HepG2 (cell line): ENCODE measurements at regions of chr2 and their contacts with region 1.

Region 1: GRCh38 chr2:72745679-72746368 is 80.0 kb downstream of the EXOC6B start:
- DNase-seq: peak; percentile 81
- ATAC-seq: peak; percentile 62; the same call in 2 of the 3 replicates
- H3K4me3 ChIP-seq: no peak overlapping the region
- H3K27ac ChIP-seq: no peak overlapping the region
- H3K4me1 ChIP-seq: peaks cover 21% of the 10 kb centered on the region
- H3K27me3 ChIP-seq: no peaks in the 10 kb centered on the region
- CTCF ChIP-seq: peak; percentile 85
- EP300 ChIP-seq: no peak
- POLR2A ChIP-seq: no peak
- RAD21 ChIP-seq: peak; percentile 87

Region 2: GRCh38 chr2:71923887-71924533 is 821.8 kb before region 1 on chr2:
- CTCF ChIA-PET with region 1: interaction called, 6 read pairs
- POLR2A ChIA-PET with region 1: no interaction called
- in situ Hi-C with region 1: loop called (anchors 5 kb)
- intact Hi-C with region 1: loop called (anchors 1 kb)
- DNase-seq: peak; percentile 76
- ATAC-seq: peak; percentile 89
- H3K4me3 ChIP-seq: no peak overlapping the region
- H3K27ac ChIP-seq: no peak overlapping the region
- H3K4me1 ChIP-seq: no peaks in the 10 kb centered on the region
- H3K27me3 ChIP-seq: peaks cover 5 to 45% of the 10 kb centered on the region in 2 experiments; a peak in 4 of 5 replicates
- CTCF ChIP-seq: peak; percentile 93
- EP300 ChIP-seq: no peak
- POLR2A ChIP-seq: no peak
- RAD21 ChIP-seq: peak; percentile 78; the same call in 1 of the 2 replicates

Region 3: GRCh38 chr2:71934595-71935261 is 811.1 kb before region 1 on chr2:
- CTCF ChIA-PET with region 1: no interaction called
- POLR2A ChIA-PET with region 1: no interaction called
- in situ Hi-C with region 1: loop called (anchors 5 kb)
- intact Hi-C with region 1: loop called (anchors 5 kb)
- DNase-seq: no peak
- ATAC-seq: no peak; the same call in 2 of the 3 replicates
- H3K4me3 ChIP-seq: no peak overlapping the region
- H3K27ac ChIP-seq: no peak overlapping the region
- H3K4me1 ChIP-seq: no peaks in the 10 kb centered on the region
- H3K27me3 ChIP-seq: peaks cover 7 to 63% of the 10 kb centered on the region in 2 experiments; a peak in 3 of 5 replicates
- CTCF ChIP-seq: no peak
- EP300 ChIP-seq: no peak
- POLR2A ChIP-seq: no peak
- RAD21 ChIP-seq: no peak

Region 4: DNA sequence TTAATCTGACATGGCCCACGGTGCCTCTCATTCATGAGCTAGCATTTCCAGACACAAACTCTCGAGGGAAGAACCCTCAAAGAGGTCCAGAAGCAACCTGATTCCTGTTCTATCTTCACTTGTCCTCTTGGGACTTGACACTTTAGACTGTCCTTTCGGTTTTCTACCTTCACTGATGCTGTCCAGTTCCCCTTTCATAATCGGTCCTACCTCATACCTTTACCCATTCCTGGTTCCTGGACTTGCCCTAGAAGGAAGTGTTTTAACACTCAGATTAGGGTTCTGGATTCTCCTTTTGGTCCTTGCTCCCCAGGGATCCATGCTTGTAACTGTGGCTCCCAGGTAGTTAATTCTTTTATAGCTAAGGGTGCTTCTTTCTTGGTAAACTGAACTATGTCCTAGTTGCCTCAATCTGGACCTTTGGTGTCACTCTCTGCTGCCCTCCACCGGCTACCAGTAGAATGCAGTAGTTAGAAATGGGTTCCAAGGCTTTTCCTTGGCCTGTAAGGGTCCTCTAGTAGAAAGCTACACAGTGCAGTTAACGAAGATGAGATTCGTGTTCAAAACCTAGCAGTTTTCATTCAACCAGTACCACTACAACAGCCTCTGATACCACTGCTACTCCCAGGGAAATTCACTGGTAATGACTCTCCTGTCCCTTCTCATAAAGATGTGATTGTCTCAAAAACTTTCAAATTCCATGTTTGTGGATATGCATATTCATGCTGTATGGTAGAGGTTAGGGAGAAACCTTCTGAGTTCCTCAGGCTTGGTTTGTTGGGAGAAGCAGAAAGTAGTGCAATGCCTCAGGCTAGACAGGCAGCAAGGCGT is 420.0 kb before region 1 on chr2:
- CTCF ChIA-PET with region 1: interaction called, 4 read pairs
- POLR2A ChIA-PET with region 1: no interaction called
- in situ Hi-C with region 1: no loop called
- intact Hi-C with region 1: loop called (anchors 2 kb)
- DNase-seq: peak; percentile 50
- ATAC-seq: peak; percentile 90
- H3K4me3 ChIP-seq: no peak overlapping the region
- H3K27ac ChIP-seq: no peak overlapping the region
- H3K4me1 ChIP-seq: no peaks in the 10 kb centered on the region
- H3K27me3 ChIP-seq: no peaks in the 10 kb centered on the region
- CTCF ChIP-seq: peak; percentile 73
- EP300 ChIP-seq: no peak
- POLR2A ChIP-seq: no peak
- RAD21 ChIP-seq: peak; percentile 47; the same call in 1 of the 2 replicates

Region 5: DNA sequence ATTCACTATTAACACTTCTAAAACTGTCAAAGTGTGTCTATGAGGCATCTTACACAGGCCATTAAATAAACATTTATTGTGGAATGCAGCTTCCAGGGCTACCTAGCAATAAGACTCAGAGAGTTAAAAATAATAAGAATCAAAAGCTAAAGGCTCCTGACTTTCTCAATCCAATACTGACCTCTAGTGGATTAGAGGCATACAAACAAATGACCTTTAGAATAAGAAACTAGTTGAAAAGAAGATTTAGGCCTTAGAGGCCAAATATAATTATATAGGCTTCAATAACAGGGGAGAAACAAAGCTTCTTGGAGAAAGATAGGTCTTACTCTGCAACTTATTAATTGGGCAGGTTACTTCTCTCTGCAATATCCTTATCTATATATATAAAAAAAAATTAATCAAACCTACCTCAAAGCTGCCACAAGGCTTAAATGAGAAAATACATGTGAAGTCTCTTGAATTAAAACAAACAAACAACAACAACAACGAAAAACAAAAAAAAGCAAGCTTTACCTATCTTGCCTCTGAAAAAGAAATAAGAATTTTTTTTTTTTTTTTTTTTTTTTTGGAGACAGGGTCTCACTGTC is 166.1 kb before region 1 on chr2:
- CTCF ChIA-PET with region 1: interaction called, 8 read pairs
- POLR2A ChIA-PET with region 1: no interaction called
- in situ Hi-C with region 1: loop called (anchors 10 kb)
- intact Hi-C with region 1: loop called (anchors 5 kb)
- DNase-seq: peak; percentile 70
- ATAC-seq: no peak
- H3K4me3 ChIP-seq: no peak overlapping the region
- H3K27ac ChIP-seq: no peak overlapping the region
- H3K4me1 ChIP-seq: peaks cover 7% of the 10 kb centered on the region
- H3K27me3 ChIP-seq: no peaks in the 10 kb centered on the region
- CTCF ChIP-seq: peak; percentile 71
- EP300 ChIP-seq: no peak
- POLR2A ChIP-seq: no peak
- RAD21 ChIP-seq: peak; percentile 81

Region 6: DNA sequence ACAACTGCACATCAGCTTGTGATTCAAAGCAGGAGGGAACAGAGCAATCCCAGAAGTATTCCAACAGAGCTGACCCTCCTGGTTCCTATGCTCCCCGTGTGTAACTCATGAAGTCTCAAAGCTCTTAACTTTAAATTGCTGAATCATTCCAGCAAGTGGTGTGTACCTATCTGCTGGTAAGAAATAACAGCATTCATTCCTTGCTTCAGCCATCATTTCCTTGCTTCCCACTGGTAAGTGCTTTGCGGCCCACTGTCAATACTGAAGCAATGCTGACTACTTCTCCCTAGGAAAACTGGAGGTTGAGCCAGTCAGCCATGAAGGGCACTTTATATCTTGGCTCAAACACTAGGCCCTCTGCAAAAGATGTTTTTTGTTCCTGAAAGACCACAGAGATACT is 142.3 kb before region 1 on chr2:
- CTCF ChIA-PET with region 1: no interaction called
- POLR2A ChIA-PET with region 1: no interaction called
- in situ Hi-C with region 1: no loop called
- intact Hi-C with region 1: loop called (anchors 5 kb)
- DNase-seq: no peak
- ATAC-seq: no peak
- H3K4me3 ChIP-seq: no peak overlapping the region
- H3K27ac ChIP-seq: no peak overlapping the region
- H3K4me1 ChIP-seq: no peaks in the 10 kb centered on the region
- H3K27me3 ChIP-seq: no peaks in the 10 kb centered on the region
- CTCF ChIP-seq: no peak
- EP300 ChIP-seq: no peak
- POLR2A ChIP-seq: no peak
- RAD21 ChIP-seq: no peak